ENCODE measurements at regions of chr6 and their contacts with region 1.

Region 1: GRCh38 chr6:73732845-73733675 is 37.1 kb downstream of the CD109 start:
- DNase-seq: no peak
- H3K4me3 ChIP-seq: no peak overlapping the region
- H3K27me3 ChIP-seq: no peaks in the 10 kb centered on the region
- CTCF ChIP-seq: peak; percentile 93

Region 2: GRCh38 chr6:73471686-73472290 is 261.3 kb before region 1 on chr6:
- CTCF ChIA-PET with region 1: no interaction called
- POLR2A ChIA-PET with region 1: no interaction called
- DNase-seq: no peak
- H3K4me3 ChIP-seq: no peak overlapping the region
- H3K27me3 ChIP-seq: no peaks in the 10 kb centered on the region
- CTCF ChIP-seq: no peak

Region 3: DNA sequence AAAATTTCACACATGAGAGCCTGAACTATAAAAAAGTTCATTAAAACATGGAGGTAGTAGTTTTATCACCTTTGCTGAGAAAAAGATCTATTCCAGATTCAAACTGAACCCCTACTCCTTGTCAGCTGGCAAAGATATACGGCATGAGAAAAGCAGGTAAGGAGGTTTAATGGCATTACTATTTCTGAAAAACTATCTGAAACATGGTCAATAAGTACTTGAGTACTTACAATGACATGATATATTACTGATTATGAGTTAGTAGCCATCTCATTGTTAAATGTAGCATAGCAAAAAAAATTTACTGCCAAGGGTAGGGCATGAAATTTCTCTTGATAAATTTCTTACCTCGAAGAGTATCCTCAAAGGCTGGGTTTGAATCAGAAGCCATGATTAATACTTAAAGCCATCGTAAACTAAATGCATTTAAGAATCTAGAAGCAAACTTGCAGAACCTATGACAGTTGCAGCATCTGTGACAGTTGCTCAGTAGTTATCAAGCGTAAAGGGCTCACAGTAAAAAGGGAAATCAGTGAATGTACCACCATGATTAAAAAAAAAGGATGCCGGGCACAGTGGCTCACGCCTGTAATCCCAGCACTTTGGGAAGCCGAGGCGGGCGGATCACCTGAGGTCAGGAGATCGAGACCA is 88.0 kb before region 1 on chr6:
- CTCF ChIA-PET with region 1: no interaction called
- POLR2A ChIA-PET with region 1: interaction called, 30 read pairs
- DNase-seq: no peak
- H3K4me3 ChIP-seq: no peak overlapping the region
- H3K27me3 ChIP-seq: no peaks in the 10 kb centered on the region
- CTCF ChIP-seq: no peak

Region 4: GRCh38 chr6:73665686-73666319 is 67.3 kb before region 1 on chr6:
- CTCF ChIA-PET with region 1: interaction called, 14 read pairs
- POLR2A ChIA-PET with region 1: no interaction called
- DNase-seq: no peak
- H3K4me3 ChIP-seq: no peak overlapping the region
- H3K27me3 ChIP-seq: no peaks in the 10 kb centered on the region
- CTCF ChIP-seq: no peak

Region 5: DNA sequence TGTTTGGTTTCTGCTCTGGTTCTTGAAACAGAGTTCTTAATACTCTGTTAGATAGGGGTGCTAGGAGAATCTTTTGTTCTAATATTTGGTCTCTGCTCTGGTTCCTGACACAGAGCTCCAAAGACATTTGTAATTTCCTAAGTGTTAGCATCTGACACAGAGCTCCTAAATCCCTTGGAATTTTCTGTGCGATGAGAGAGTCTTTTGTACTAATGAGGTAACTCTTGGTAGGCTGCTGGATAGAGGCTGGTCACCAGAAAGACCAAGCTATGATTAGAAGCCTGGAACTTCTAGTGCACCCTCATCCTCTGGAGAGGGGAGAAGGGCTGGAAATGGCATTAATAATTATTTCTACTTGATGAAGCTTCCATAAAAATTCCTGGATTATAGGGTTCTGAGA is 44.7 kb before region 1 on chr6:
- CTCF ChIA-PET with region 1: interaction called, 26 read pairs
- POLR2A ChIA-PET with region 1: no interaction called
- DNase-seq: no peak
- H3K4me3 ChIP-seq: no peak overlapping the region
- H3K27me3 ChIP-seq: no peaks in the 10 kb centered on the region
- CTCF ChIP-seq: no peak

Region 6: DNA sequence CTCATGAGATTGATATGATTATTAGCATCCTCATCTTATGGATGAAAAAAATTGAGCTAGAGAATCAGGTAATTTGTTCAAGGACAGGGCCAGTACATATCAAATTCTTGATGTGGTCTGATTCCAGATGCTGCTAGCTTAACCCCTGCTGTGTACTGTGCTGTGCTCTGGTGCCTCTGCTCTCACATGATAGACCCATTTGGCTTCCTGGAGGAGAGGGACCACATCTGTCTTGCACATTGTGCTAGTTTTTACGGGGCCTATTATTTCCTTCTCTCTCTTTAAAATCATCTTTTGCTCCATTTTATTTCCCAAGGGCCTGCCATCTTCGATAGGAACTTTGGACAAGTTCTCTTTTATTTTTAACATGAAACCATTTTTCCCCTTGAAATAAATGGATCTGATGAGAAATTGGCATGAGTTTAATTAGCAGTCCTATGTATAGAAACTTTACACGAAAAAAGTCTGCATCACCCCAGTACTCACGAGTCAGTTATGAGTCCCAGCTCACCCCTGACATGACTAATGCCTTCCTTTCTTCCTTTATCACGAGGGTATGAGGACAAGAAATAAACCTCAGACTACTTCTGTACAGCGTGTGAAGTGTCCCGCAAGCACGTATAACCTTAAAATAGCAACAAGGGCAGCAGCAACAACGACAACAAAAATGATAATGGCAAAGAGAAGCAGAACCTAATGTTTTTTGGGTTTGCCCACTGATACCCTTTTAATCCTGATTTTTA is 10.6 kb before region 1 on chr6:
- CTCF ChIA-PET with region 1: interaction called, 11 read pairs
- POLR2A ChIA-PET with region 1: no interaction called
- DNase-seq: peak; percentile 91
- H3K4me3 ChIP-seq: no peak overlapping the region
- H3K27me3 ChIP-seq: no peaks in the 10 kb centered on the region
- CTCF ChIP-seq: no peak